Activated CD8-positive, alpha-beta T cell treated with anti-CD3 and anti-CD28 coated beads for 36 hours (primary cell): ENCODE measurements at regions of chr3 and their contacts with region 1.

Region 1: GRCh38 chr3:153284282-153284938 is 122.4 kb downstream of the RAP2B start:
- DNase-seq: peak; percentile 72
- ATAC-seq: peak; percentile 86
- H3K4me3 Mint-ChIP-seq: peak overlapping the region; percentile 9
- H3K27ac Mint-ChIP-seq: peak overlapping the region; percentile 95
- H3K4me1 Mint-ChIP-seq: peaks cover 39% of the 10 kb centered on the region
- H3K27me3 Mint-ChIP-seq: no peaks in the 10 kb centered on the region
- CTCF ChIP-seq: no peak

Region 2: GRCh38 chr3:153232910-153233271 is 51.5 kb before region 1 on chr3:
- CTCF ChIA-PET with region 1: no interaction called
- POLR2A ChIA-PET with region 1: no interaction called
- intact Hi-C with region 1: no loop called
- DNase-seq: no peak
- ATAC-seq: no peak
- H3K4me3 Mint-ChIP-seq: no peak overlapping the region
- H3K27ac Mint-ChIP-seq: no peak overlapping the region
- H3K4me1 Mint-ChIP-seq: peaks cover 8% of the 10 kb centered on the region
- H3K27me3 Mint-ChIP-seq: no peaks in the 10 kb centered on the region
- CTCF ChIP-seq: no peak

Region 3: DNA sequence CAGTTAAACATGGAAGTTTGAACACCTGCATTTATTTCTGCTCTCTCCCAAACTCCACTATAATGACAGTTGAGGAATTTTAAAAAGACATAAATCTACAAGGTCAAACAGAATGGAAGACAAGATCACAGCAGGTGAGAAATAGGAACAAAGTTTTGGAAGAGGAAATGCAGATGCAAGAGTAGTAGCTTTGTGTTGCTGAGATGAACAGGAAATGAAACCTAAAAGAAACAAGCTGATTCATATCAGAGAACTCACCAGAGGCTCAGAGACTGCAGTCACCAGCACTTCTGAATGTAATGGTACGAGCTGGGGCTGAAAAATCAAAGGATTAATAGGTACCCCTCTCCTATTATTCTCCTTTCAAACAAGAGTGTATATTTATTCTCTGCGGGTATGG is 337.5 kb after region 1 on chr3:
- CTCF ChIA-PET with region 1: no interaction called
- POLR2A ChIA-PET with region 1: interaction called, 3 read pairs
- intact Hi-C with region 1: loop called (anchors 10 kb)
- DNase-seq: peak; percentile 35
- ATAC-seq: peak; percentile 70
- H3K4me3 Mint-ChIP-seq: peak overlapping the region; percentile 15
- H3K27ac Mint-ChIP-seq: peak overlapping the region; percentile 70
- H3K4me1 Mint-ChIP-seq: peaks cover 51% of the 10 kb centered on the region
- H3K27me3 Mint-ChIP-seq: no peaks in the 10 kb centered on the region
- CTCF ChIP-seq: no peak